ENCODE measurements at regions of chr1 and their contacts with region 1.

Region 1: GRCh38 chr1:154878371-154879022 is 8.4 kb upstream of the KCNN3 start:
- DNase-seq: peak; percentile 66 to 80
- ATAC-seq: peak; percentile 91

Region 2: GRCh38 chr1:154559466-154560088 is 318.9 kb before region 1 on chr1:
- intact Hi-C with region 1: loop called in 1 of 2 experiments (anchors 5 kb)
- DNase-seq: peak; percentile 82 to 90
- ATAC-seq: peak; percentile 70

Region 3: DNA sequence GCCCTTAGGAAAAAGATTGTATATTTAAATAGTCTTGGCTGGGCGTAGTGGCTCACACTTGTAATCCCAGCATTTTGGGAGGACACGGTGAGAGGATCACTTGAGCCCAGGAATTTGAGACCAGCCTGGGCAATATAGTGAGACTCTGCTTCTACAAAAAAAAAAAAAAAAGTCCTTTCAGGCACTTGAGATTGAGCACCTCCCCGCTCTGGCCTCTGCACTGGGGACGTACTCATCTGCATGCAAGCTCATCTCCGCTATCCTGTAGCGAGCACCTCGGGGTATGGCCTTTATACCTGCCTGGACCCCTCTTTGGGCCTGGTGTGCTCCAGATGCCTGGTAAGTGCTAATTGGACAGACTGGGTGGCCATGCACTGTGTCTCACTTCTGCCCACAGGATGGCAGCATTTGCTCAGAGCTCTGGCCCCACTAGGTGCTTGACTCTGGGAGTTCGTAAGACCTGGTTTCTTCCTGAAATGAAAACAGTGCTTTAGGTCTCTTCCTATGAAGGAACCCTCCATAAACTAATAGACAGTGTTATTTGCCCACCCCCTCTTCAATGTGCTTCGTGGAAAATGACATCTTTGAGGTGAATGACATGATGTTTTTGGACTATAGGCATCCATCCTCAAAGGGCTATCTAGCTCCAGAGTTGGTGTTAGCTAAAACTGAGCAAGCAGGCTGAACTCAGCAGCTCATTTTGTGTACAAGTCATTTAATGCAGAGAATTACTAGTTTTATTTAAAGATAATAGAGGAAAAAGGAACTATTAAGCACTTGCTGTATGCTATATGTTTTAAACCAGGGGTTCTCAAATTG is 208.8 kb before region 1 on chr1:
- intact Hi-C with region 1: loop called in 1 of 2 experiments (anchors 5 kb)
- DNase-seq: peak; percentile 44 to 66
- ATAC-seq: peak; percentile 90

Region 4: GRCh38 chr1:155218854-155219591 is 340.5 kb after region 1 on chr1:
- intact Hi-C with region 1: no loop called
- DNase-seq: no peak
- ATAC-seq: peak; percentile 44

Measured in left colon (tissue), 2 donors.